Transverse colon (tissue), 4 donors: ENCODE measurements at regions of chr19 and their contacts with region 1.

Region 1: DNA sequence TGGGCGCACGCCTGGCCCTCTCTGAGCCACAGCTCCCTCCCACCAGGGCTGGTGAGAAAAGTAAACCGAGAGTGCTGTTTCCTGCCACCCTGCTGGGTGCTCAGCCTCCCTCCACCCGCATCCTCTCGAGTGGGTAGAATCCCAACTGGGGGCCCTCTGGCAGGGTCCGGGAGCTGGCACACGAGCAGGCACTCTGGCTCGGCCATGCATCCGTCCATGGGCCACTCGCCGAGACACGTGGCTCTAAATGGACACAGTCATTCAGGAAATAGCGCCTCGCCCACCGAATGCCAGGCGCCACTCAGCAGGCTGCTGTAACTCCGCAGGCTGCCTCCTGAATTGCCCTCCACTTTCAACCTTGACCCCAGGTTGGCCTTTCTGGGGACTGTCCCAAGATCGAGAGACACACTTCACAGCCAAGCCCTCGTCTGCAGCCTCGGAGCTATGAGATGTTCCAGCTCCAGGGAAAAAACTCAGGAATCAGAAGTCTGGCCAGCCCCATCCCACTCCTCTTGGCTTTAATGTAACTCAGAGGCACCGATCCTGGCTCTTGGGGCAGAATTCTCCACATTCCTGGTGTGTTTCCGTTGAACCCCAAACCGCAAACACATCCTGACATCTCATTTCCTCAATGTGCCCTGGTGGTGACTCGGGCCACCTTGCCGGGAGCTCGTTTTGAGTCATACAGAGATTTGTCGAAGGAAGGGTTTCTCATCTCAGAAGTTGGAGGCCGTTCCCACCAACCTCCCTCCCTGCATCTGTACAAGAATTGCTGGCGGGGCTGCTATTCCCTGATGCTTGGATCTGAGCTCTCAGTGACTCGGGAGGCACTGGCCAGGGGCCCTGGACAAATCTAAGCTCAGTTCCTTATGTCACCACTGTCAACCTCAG is 14.1 kb downstream of the KLF2 start:
- DNase-seq: peak; percentile 40
- H3K4me3 ChIP-seq: no peak overlapping the region
- H3K27ac ChIP-seq: peak overlapping the region in 3 of 4 donors; percentile 4 to 45 (median 9)
- H3K4me1 ChIP-seq: peaks cover 10 to 26% (median 13%) of the 10 kb centered on the region in 4 donors
- H3K27me3 ChIP-seq: no peaks in the 10 kb centered on the region
- CTCF ChIP-seq: no peak
- EP300 ChIP-seq: no peak
- POLR2A ChIP-seq: no peak

Region 2: DNA sequence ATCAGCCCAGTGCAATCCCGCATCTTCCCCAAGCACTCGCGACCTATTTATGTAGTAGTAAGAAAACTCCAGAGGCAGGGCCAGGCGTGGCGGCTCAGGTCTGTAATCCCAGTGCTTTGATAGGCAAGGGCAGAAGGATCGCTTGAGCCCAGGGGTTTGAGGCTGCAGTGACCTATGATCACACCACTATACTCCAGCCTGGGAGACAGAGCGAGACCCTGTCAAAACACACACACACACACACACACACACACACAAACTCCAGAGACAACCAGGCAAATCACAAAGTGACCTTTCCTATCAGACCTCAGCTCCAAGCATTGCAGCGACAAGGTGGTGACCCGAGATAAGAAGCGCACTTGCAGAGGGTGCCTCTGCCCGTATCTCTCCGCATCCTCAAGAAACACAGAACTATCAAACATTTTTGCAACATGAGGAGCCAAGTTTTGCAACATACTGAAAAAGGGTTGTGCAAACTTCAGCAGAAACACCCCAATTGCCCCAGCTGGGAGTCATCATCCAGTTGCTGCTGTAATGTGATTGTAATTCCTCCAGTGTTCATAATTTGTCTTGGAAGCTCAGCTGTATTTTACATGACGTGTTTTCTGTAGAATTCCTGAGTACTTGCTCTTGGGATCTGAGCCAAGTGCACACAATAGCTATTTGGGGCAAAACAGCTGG is 22.8 kb before region 1 on chr19:
- in situ Hi-C with region 1: no loop called
- intact Hi-C with region 1: no loop called
- DNase-seq: peak; percentile 45
- H3K4me3 ChIP-seq: no peak overlapping the region
- H3K27ac ChIP-seq: peak overlapping the region; percentile 66 to 82 (median 74)
- H3K4me1 ChIP-seq: peaks cover 0 to 17% (median 0%) of the 10 kb centered on the region in 4 donors
- H3K27me3 ChIP-seq: no peaks in the 10 kb centered on the region
- CTCF ChIP-seq: no peak
- EP300 ChIP-seq: no peak
- POLR2A ChIP-seq: no peak

Region 3: GRCh38 chr19:16376649-16377048 is 37.9 kb after region 1 on chr19:
- in situ Hi-C with region 1: no loop called
- intact Hi-C with region 1: loop called (anchors 5 kb)
- DNase-seq: no peak
- H3K4me3 ChIP-seq: no peak overlapping the region
- H3K27ac ChIP-seq: no peak overlapping the region
- H3K4me1 ChIP-seq: peaks cover 11 to 20% (median 14%) of the 10 kb centered on the region in 4 donors
- H3K27me3 ChIP-seq: no peaks in the 10 kb centered on the region
- CTCF ChIP-seq: peak in 2 of 5 experiments; percentile 15 to 26
- EP300 ChIP-seq: no peak
- POLR2A ChIP-seq: no peak

Region 4: DNA sequence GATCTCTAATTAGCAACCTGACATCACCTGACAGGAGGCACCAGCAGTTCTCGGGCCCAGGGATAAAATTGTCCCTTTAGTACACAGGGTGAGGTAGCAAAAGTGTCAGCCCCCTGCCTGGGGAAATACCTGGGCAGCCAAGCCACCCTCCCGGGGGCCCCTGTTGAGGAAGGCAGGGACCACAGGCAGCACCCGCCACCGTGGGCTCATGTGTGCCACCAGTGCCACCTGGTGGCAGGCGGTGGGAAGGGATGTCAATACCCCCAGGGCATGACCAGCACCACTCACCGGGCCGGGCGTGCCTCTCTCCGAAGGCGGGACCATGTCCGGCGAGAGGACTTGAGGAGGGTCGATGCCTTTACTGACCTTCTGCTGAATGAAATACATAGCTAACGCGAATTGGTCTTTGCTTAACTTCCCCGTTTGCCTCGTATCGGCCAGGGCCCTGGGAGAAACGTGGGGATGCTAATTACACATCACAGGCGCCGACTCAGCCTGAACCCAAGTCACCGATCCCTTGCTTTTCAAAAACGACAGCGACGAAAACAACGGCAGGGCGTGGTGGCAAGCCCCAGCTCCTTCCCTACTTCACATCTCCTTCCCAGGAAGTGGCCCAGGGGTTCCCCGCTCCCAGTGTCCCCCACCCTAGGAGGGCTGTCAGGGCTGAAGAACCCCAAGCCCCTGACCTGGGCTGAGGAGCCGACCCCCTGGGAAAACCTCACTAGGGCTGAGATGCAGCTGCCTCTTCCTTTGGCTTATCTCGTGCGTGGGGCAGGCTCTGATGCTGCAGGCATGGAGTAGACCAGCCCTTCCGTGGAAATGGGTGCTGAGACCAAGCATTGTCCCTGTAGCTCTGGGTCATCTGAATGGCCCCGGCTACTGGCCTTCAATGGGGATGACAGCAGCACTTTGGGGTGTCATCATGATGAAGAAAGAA is 79.2 kb after region 1 on chr19:
- in situ Hi-C with region 1: no loop called
- intact Hi-C with region 1: no loop called
- DNase-seq: peak; percentile 55
- H3K4me3 ChIP-seq: no peak overlapping the region
- H3K27ac ChIP-seq: no peak overlapping the region
- H3K4me1 ChIP-seq: no peaks in the 10 kb centered on the region
- H3K27me3 ChIP-seq: no peaks in the 10 kb centered on the region
- CTCF ChIP-seq: peak; percentile 80 to 84 (median 81)
- EP300 ChIP-seq: no peak
- POLR2A ChIP-seq: no peak